ENCODE measurements at regions of chr9 and their contacts with region 1.

Region 1: DNA sequence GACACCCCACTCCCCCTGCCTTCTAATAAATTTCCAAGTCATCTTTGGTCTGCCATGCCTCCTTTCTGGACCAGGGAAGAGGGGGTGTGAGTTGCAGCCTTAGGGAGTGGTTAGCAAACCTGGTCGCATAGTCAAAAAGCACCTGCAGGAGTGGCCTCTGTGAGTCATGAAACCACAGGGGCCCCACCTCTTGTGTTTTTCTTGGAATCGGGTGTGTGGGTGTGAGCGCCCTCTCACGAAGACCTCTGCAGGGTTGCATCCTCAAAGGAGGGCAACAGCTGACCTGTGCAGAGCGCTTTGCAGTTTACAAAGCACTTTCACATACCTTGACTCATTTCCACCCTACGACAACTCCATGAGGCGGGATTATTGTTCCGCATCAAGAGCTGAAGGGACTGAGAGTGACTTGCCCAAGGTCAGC is 36.8 kb upstream of the TEX48 start:
- DNase-seq: peak; percentile 96
- H3K4me3 Mint-ChIP-seq: peak overlapping the region; percentile 5
- H3K27ac Mint-ChIP-seq: peak overlapping the region; percentile 97
- H3K4me1 Mint-ChIP-seq: peaks cover 75% of the 10 kb centered on the region
- H3K27me3 Mint-ChIP-seq: peaks cover 4% of the 10 kb centered on the region

Region 2: GRCh38 chr9:114706711-114707110 is 12.1 kb before region 1 on chr9:
- CTCF ChIA-PET with region 1: interaction called, 12 read pairs
- DNase-seq: no peak
- H3K4me3 Mint-ChIP-seq: no peak overlapping the region
- H3K27ac Mint-ChIP-seq: no peak overlapping the region
- H3K4me1 Mint-ChIP-seq: peaks cover 62% of the 10 kb centered on the region
- H3K27me3 Mint-ChIP-seq: peaks cover 5% of the 10 kb centered on the region

Region 3: GRCh38 chr9:114769624-114770023 is 50.8 kb after region 1 on chr9:
- CTCF ChIA-PET with region 1: no interaction called
- DNase-seq: no peak
- H3K4me3 Mint-ChIP-seq: no peak overlapping the region
- H3K27ac Mint-ChIP-seq: no peak overlapping the region
- H3K4me1 Mint-ChIP-seq: peaks cover 6% of the 10 kb centered on the region
- H3K27me3 Mint-ChIP-seq: peaks cover 4% of the 10 kb centered on the region

Region 4: DNA sequence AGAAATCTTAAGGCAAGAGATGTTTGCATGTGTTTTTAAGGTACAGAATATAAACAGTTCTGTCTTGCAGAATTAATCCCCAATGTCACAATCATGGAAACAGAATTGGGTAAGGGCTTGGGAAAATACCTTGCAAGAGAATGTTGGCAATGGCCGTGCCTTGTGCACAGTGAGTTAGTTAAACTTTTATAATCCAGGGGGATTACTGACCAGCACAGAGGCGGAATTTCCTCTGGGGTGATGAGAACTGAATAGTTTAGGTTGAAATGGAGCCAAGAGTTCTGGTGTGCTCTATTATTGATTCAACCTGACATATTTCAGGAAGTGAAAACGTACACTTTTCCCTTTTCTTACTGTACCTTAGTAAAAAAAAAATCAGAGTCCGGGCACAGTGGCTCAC is 67.4 kb after region 1 on chr9:
- CTCF ChIA-PET with region 1: no interaction called
- DNase-seq: no peak
- H3K4me3 Mint-ChIP-seq: no peak overlapping the region
- H3K27ac Mint-ChIP-seq: no peak overlapping the region
- H3K4me1 Mint-ChIP-seq: no peaks in the 10 kb centered on the region
- H3K27me3 Mint-ChIP-seq: peaks cover 3% of the 10 kb centered on the region